ENCODE measurements at regions of chr2 and their contacts with region 1.

Region 1: GRCh38 chr2:122186761-122187222 is 431.3 kb downstream of the TSN start:
- DNase-seq: no peak
- H3K4me3 ChIP-seq: no peak overlapping the region
- H3K27ac ChIP-seq: no peak overlapping the region
- H3K4me1 ChIP-seq: no peaks in the 10 kb centered on the region
- H3K27me3 ChIP-seq: no peaks in the 10 kb centered on the region
- CTCF ChIP-seq: no peak
- EP300 ChIP-seq: no peak
- POLR2A ChIP-seq: no peak

Region 2: DNA sequence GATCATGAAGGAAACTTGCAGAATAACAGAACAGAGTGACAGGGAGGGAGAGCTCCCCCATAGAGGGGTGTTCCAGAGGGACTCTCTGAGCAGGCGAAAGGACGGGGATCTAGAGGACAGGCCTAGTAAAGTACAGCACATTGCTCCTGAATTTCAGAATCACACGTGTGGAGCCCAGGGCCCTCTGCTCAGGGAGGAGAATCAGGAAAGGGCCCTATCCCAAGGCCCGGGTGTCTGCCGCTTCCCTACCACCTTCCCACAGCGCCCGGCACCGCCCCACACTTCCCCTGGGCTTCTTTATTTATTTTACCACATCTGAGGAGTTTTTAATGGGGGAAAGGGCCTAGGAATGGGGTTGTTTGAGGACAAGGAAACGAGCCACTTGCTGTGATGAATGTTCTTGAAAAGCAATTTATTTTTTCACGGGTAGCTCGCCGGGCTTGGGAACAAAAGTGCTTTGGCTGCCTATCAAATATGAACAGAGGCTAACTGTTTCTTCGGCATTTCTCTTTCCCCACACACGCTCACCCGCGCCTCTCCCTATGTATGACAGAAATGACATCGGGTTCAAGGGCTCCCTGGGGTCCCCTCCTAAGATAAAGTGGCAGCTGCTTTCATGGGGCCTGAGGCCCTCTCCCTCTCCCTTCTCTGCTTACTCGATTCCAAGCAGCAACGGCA is 1530.4 kb before region 1 on chr2:
- in situ Hi-C with region 1: no loop called
- intact Hi-C with region 1: loop called (anchors 5 kb)
- DNase-seq: no peak
- H3K4me3 ChIP-seq: no peak overlapping the region
- H3K27ac ChIP-seq: no peak overlapping the region
- H3K4me1 ChIP-seq: peaks cover 0 to 11% (median 3%) of the 10 kb centered on the region in 4 donors
- H3K27me3 ChIP-seq: peaks cover 16% of the 10 kb centered on the region
- CTCF ChIP-seq: no peak
- EP300 ChIP-seq: no peak
- POLR2A ChIP-seq: no peak

Region 3: DNA sequence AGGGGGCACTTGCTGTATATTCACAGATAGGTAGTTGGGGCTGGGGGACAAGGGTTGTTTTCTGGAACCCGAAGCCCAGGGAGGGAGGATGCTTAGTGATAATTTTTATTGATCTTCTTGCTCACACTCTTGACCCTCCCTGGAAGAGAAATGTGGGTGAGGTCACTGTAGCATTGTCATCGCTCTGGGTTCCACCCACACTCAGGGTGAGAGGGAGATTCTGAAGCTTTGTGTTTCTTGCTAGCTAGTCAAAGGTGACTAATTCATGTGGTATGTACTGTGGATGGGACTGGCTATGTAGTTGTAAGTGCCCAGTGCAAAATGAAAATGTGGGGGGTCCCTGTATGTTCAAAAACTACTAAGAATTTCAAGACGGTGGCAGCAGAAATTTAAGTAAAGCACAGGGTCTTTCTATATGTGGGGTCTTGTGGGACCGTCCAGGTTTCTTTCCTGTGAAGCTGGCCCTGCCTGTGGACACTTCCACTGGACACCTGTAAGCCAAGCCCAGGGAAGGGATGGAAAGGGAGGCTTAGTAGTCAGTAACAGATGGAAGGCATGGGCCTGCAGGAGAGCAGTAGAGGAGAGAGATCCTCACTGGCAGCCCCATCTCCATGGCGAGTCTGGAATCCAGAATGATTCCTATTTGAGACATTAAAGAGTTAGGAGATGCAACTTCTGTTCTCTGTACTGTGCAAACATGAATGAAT is 396.4 kb before region 1 on chr2:
- in situ Hi-C with region 1: no loop called
- intact Hi-C with region 1: no loop called
- DNase-seq: no peak
- H3K4me3 ChIP-seq: no peak overlapping the region
- H3K27ac ChIP-seq: no peak overlapping the region
- H3K4me1 ChIP-seq: no peaks in the 10 kb centered on the region
- H3K27me3 ChIP-seq: no peaks in the 10 kb centered on the region
- CTCF ChIP-seq: no peak
- EP300 ChIP-seq: no peak
- POLR2A ChIP-seq: no peak

Region 4: DNA sequence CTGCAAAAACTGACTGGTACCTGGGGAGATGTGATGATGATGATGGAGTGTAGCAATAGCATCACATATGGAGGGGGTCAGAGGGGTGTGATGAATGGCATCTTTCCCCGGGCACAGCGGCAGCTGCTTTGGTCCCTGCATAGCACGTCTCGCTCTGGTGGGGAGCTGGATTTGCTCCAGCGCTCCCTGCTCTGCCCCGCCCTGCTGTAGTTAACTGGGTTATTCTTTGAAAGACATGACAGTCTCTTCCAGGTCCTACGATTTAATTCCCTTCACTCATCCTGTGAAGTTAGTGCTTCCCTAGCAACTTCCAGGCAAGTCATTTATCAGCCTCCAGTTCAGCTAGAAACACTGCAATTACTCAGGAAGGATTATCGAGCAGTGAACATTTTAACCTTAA is 31.8 kb after region 1 on chr2:
- in situ Hi-C with region 1: no loop called
- intact Hi-C with region 1: no loop called
- DNase-seq: no peak
- H3K4me3 ChIP-seq: no peak overlapping the region
- H3K27ac ChIP-seq: no peak overlapping the region
- H3K4me1 ChIP-seq: no peaks in the 10 kb centered on the region
- H3K27me3 ChIP-seq: no peaks in the 10 kb centered on the region
- CTCF ChIP-seq: no peak
- EP300 ChIP-seq: no peak
- POLR2A ChIP-seq: no peak

Measured in transverse colon (tissue), 4 donors.